ENCODE measurements at regions of chr20 and their contacts with region 1.

Region 1: GRCh38 chr20:50744143-50744792 is 12.9 kb downstream of the PARD6B start:
- DNase-seq: peak; percentile 89
- H3K4me3 ChIP-seq: no peak overlapping the region
- H3K27ac ChIP-seq: peak overlapping the region; percentile 58
- H3K4me1 ChIP-seq: peaks cover 43% of the 10 kb centered on the region
- H3K27me3 ChIP-seq: no peaks in the 10 kb centered on the region
- CTCF ChIP-seq: peak; percentile 47 to 56

Region 2: DNA sequence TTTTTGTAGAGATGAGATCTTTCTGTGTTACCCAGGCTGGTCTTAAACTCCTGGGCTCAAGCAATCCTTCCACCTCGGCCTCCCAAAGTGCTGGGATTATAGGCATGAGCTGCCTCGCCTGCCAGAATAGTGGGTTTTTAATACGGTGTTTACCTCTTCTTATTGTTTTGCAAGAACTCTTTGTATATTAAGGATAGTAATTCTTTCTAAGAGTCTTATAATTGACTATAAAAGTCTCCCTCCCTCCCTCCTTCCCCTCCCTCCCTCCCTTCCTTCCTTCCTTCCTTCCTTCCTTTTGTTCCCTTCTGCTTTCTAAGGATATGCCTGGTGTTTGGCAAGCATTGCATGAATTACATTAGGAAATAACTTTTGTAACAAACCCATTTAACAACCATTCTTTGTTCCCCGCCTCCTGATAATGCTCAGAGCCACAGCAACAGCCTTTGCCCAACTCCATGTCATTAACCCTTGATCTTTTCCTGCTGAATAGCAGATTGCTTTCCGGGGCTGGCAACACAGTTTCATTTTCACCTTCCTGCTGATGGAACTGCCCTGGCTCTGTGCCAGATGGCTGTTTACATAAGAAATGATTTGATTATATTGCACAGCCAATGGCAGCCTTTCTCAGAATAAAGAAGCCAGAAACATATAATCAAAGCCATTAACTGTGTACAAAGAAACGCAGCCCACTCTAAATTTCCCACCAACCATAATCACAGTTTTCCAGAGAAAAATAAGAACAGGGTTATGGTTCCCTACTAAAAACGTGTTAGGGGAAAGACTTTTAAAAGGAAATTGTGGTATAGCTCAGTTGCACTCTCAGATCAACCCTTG is 377.8 kb before region 1 on chr20:
- CTCF ChIA-PET with region 1: no interaction called
- dilution Hi-C with region 1: no loop called
- in situ Hi-C with region 1: no loop called
- intact Hi-C with region 1: no loop called
- DNase-seq: peak; percentile 47
- H3K4me3 ChIP-seq: no peak overlapping the region
- H3K27ac ChIP-seq: no peak overlapping the region
- H3K4me1 ChIP-seq: no peaks in the 10 kb centered on the region
- H3K27me3 ChIP-seq: no peaks in the 10 kb centered on the region
- CTCF ChIP-seq: no peak

Region 3: GRCh38 chr20:50484276-50484976 is 259.8 kb before region 1 on chr20:
- CTCF ChIA-PET with region 1: no interaction called
- dilution Hi-C with region 1: no loop called
- in situ Hi-C with region 1: no loop called
- intact Hi-C with region 1: loop called (anchors 5 kb)
- DNase-seq: peak; percentile 43
- H3K4me3 ChIP-seq: peak overlapping the region; percentile 18 to 52 (median 42)
- H3K27ac ChIP-seq: peak overlapping the region; percentile 82
- H3K4me1 ChIP-seq: peaks cover 12% of the 10 kb centered on the region
- H3K27me3 ChIP-seq: no peaks in the 10 kb centered on the region
- CTCF ChIP-seq: peak; percentile 38 to 52

Region 4: DNA sequence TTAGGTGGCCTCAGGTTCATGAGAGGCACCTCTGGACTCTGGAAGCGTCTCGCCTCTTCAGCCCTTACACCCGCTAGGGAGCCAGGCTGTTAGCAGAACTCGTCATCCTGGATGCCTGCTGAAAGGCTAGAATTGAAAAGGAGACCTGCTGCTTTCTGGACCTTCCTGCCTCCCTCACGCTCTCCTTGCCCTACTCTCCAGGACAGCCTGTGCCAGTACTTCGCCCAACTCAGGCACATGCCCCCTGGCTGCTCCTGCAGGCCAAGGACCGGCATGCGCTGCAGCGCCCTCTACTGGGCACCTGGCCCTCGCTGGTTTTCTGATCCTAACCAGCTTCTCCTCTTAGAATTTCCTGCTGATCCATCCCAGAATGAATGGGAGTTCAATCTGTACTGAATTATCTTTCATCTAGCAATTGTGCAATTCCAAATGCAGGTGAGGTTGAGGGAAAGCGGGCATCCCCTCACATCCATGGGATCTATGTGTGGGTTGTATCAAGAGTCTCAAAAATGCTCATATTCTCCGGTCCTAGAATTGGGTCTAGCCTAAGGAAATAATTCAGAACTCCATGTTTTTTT is 156.1 kb before region 1 on chr20:
- CTCF ChIA-PET with region 1: interaction called, 7 read pairs
- dilution Hi-C with region 1: no loop called
- in situ Hi-C with region 1: no loop called
- intact Hi-C with region 1: loop called (anchors 2 kb)
- DNase-seq: peak; percentile 54
- H3K4me3 ChIP-seq: no peak overlapping the region
- H3K27ac ChIP-seq: no peak overlapping the region
- H3K4me1 ChIP-seq: peaks cover 25% of the 10 kb centered on the region
- H3K27me3 ChIP-seq: no peaks in the 10 kb centered on the region
- CTCF ChIP-seq: peak; percentile 96 to 99

Region 5: GRCh38 chr20:50625986-50626677 is 118.1 kb before region 1 on chr20:
- CTCF ChIA-PET with region 1: interaction called, 5 read pairs
- dilution Hi-C with region 1: no loop called
- in situ Hi-C with region 1: no loop called
- intact Hi-C with region 1: loop called (anchors 1 kb)
- DNase-seq: no peak
- H3K4me3 ChIP-seq: no peak overlapping the region
- H3K27ac ChIP-seq: no peak overlapping the region
- H3K4me1 ChIP-seq: peaks cover 26% of the 10 kb centered on the region
- H3K27me3 ChIP-seq: no peaks in the 10 kb centered on the region
- CTCF ChIP-seq: peak; percentile 37 to 51

Region 6: DNA sequence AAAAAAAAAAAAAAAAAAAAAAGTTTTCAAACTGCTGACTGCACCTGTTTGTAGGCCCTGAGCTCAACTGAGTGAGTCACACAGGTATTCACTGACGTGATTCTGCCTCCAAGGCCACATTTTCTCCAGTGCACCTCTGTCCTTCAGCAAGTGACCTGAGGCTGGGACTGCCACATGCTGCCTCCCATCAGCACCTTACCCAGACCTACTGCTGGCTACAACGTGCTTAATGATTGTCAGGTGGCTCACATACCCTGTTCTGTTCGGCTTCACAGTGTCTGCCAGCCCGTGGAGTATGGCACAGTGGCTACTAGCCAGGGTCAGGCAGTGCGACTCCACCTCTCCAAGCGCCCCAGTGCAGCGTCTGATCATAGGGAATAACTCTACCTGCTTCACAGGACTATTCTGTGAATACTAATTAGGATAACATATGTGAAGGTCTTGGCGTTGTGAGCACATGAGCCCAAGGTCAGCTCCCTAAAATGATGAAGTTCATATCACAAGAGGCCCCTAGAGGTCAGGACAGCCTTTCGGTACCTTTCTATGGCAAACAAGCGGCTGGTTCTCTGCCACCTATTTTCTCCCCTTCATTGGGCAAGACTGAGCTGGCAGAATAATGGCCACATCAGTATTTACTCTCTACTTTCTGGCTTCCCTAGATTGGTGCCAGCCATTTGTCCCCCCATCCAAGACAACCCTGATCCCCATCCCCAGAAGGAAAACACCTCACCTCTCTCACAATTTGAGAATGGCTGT is 81.0 kb before region 1 on chr20:
- CTCF ChIA-PET with region 1: interaction called, 13 read pairs
- dilution Hi-C with region 1: no loop called
- in situ Hi-C with region 1: loop called in 1 of 2 experiments (anchors 10 kb)
- intact Hi-C with region 1: loop called (anchors 1 kb)
- DNase-seq: peak; percentile 71
- H3K4me3 ChIP-seq: no peak overlapping the region
- H3K27ac ChIP-seq: no peak overlapping the region
- H3K4me1 ChIP-seq: peaks cover 4% of the 10 kb centered on the region
- H3K27me3 ChIP-seq: no peaks in the 10 kb centered on the region
- CTCF ChIP-seq: peak; percentile 35 to 53

Region 7: GRCh38 chr20:50686821-50687494 is 57.3 kb before region 1 on chr20:
- CTCF ChIA-PET with region 1: no interaction called
- dilution Hi-C with region 1: no loop called
- in situ Hi-C with region 1: no loop called
- intact Hi-C with region 1: no loop called
- DNase-seq: no peak
- H3K4me3 ChIP-seq: no peak overlapping the region
- H3K27ac ChIP-seq: no peak overlapping the region
- H3K4me1 ChIP-seq: no peaks in the 10 kb centered on the region
- H3K27me3 ChIP-seq: no peaks in the 10 kb centered on the region
- CTCF ChIP-seq: no peak

Region 8: GRCh38 chr20:50762435-50763201 is 18.4 kb after region 1 on chr20:
- CTCF ChIA-PET with region 1: no interaction called
- dilution Hi-C with region 1: no loop called
- in situ Hi-C with region 1: no loop called
- intact Hi-C with region 1: loop called (anchors 2 kb)
- DNase-seq: peak; percentile 82
- H3K4me3 ChIP-seq: peak overlapping the region in 2 of 3 experiments; percentile 0 to 28
- H3K27ac ChIP-seq: peak overlapping the region; percentile 90
- H3K4me1 ChIP-seq: peaks cover 37% of the 10 kb centered on the region
- H3K27me3 ChIP-seq: no peaks in the 10 kb centered on the region
- CTCF ChIP-seq: no peak